Left cardiac atrium (tissue), 4 donors: ENCODE measurements at regions of chr1 and their contacts with region 1.

Region 1: GRCh38 chr1:53047737-53048732 is 14.0 kb upstream of the PODN start:
- DNase-seq: no peak
- ATAC-seq: peak in 1 of 2 donors; percentile 73

Region 2: DNA sequence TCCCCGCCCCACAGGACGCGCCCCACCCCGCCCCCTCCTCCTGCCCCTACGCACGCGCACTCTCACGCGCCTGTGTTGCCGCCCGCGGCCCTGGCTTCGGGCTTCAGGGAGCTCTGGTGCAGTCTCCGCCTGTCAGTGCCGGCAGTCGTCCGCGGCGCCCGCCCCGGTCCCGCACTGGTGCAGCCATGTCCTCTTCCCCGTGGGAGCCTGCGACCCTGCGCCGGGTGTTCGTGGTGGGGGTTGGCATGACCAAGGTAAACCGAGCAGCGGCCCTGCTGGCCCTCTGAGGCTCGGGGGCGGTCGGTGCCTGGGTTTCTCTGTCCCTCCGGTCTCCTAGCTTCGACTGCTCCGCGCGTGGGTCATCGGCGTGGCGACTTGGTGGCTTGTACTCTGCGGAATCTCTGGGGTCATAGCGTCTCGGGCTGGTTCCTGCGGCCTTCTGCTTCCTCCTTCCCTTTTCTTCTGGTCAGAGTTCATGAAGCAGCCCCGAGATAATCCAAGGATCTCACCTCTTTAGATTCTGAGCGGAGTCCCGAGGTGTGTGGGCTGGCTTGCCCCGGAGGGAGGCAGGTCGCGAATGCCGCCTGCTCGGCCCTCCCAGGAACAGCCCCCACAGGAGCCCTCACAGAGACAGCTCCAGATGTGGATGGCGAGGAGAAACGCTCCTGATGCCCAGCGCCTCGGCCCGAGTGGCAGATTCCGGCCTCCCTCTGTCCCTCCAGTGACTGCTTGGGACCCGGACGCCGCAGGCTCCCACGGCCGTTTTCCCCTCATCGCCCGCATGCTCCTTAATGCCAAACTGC is 120.6 kb before region 1 on chr1 and contains the start of gene SCP2:
- intact Hi-C with region 1: loop called in 1 of 2 experiments (anchors 10 kb)
- DNase-seq: peak; percentile 88
- ATAC-seq: peak; percentile 96 to 98
- total RNA-seq, gene SCP2: 126 to 148 TPM

Region 3: GRCh38 chr1:53025034-53025768 is 22.8 kb before region 1 on chr1:
- intact Hi-C with region 1: loop called in 1 of 2 experiments (anchors 2 kb)
- DNase-seq: peak; percentile 69
- ATAC-seq: peak; percentile 94